ENCODE measurements at regions of chr5 and their contacts with region 1.

Region 1: DNA sequence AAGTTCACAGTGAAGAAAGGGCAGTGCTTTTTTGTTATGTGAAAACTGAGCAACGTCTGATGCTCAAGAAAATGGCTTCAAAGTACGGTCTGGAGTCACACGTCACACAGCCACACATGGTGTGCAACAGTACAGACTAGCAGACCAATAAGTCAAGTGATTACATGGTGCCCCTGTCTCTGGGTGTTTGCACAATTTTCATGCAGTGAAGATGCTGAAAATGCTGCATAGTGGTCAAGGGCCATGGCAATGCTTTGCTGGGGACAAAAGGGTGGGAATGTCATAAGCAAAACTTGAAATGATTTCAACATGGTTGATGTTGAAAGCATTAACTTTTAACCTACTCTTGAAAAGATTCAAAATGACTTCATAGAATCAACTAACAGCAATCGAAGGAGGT is 231.2 kb downstream of the EBF1 start:
- DNase-seq: no peak
- ATAC-seq: no peak
- H3K4me3 ChIP-seq: no peak overlapping the region
- H3K27ac ChIP-seq: no peak overlapping the region
- H3K4me1 ChIP-seq: no peaks in the 10 kb centered on the region
- H3K27me3 ChIP-seq: no peaks in the 10 kb centered on the region
- CTCF ChIP-seq: no peak
- EP300 ChIP-seq: no peak
- POLR2A ChIP-seq: no peak
- RAD21 ChIP-seq: no peak

Region 2: DNA sequence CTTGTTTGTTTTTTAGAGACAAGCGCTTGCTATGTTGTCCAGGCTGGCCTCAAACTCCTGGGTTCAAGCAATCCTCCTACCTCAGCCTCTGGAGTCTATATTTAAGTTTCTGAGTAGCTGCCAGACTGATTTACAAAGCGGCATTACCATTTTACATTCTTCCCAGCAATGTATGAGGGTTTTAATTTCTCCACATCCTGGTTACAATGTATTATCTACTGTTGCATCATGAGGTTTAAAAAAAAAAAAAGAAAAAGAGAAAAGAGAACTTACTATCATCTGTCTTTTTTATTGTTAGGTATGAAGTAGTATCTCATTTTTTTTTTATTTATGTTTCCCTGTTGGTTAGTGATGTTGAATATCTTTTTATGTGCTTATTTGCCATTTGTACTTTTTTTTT is 990.7 kb before region 1 on chr5:
- CTCF ChIA-PET with region 1: no interaction called
- POLR2A ChIA-PET with region 1: no interaction called
- RAD21 ChIA-PET with region 1: no interaction called
- SMC1A ChIA-PET with region 1: no interaction called
- in situ Hi-C with region 1: no loop called
- intact Hi-C with region 1: no loop called
- DNase-seq: no peak
- ATAC-seq: no peak
- H3K4me3 ChIP-seq: no peak overlapping the region
- H3K27ac ChIP-seq: no peak overlapping the region
- H3K4me1 ChIP-seq: no peaks in the 10 kb centered on the region
- H3K27me3 ChIP-seq: no peaks in the 10 kb centered on the region; a peak in 1 of 4 replicates
- CTCF ChIP-seq: no peak
- EP300 ChIP-seq: no peak
- POLR2A ChIP-seq: no peak
- RAD21 ChIP-seq: no peak

Region 3: DNA sequence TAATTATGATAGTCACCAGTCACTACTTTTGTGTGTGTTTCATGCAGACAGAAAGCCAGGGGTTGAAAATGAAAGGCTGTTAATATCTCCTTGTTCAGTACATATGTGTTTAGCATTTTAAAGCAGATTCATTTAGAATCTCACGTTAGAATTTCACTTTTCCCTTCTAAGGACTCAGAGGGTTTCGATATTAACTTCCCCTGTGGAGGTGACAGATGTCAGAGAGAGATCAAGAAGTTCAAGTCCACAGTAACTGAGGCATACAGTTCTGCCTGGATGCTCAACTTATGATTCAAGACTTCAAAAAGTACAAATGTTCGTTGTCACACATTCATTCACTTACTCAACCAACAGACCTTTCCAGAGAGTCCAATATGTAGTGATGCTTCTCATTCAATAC is 19.9 kb before region 1 on chr5:
- CTCF ChIA-PET with region 1: interaction called, 9 read pairs
- POLR2A ChIA-PET with region 1: interaction called, 16 read pairs
- RAD21 ChIA-PET with region 1: interaction called, 30 read pairs
- SMC1A ChIA-PET with region 1: interaction called, 149 read pairs
- in situ Hi-C with region 1: no loop called
- intact Hi-C with region 1: no loop called
- DNase-seq: peak; percentile 80
- ATAC-seq: peak; percentile 79
- H3K4me3 ChIP-seq: no peak overlapping the region
- H3K27ac ChIP-seq: peak overlapping the region; percentile 68
- H3K4me1 ChIP-seq: peaks cover 31% of the 10 kb centered on the region
- H3K27me3 ChIP-seq: no peaks in the 10 kb centered on the region
- CTCF ChIP-seq: no peak
- EP300 ChIP-seq: peak; percentile 16 to 30; a peak in 1 of 4 replicates
- POLR2A ChIP-seq: no peak
- RAD21 ChIP-seq: no peak